Activated naive CD4-positive, alpha-beta T cell treated with anti-CD3 and anti-CD28 coated beads, Interleukin-2, amount 10 ng/mL, durations not matched to agents 7 days and 5 days (primary cell): ENCODE measurements at regions of chr5 and their contacts with region 1.

Region 1: GRCh38 chr5:96336351-96336985 is 96.6 kb downstream of the PCSK1 start:
- DNase-seq: peak; percentile 70
- H3K4me3 Mint-ChIP-seq: no peak overlapping the region
- H3K27ac Mint-ChIP-seq: no peak overlapping the region
- H3K4me1 Mint-ChIP-seq: peaks cover 4% of the 10 kb centered on the region
- H3K27me3 Mint-ChIP-seq: peaks cover 18% of the 10 kb centered on the region

Region 2: DNA sequence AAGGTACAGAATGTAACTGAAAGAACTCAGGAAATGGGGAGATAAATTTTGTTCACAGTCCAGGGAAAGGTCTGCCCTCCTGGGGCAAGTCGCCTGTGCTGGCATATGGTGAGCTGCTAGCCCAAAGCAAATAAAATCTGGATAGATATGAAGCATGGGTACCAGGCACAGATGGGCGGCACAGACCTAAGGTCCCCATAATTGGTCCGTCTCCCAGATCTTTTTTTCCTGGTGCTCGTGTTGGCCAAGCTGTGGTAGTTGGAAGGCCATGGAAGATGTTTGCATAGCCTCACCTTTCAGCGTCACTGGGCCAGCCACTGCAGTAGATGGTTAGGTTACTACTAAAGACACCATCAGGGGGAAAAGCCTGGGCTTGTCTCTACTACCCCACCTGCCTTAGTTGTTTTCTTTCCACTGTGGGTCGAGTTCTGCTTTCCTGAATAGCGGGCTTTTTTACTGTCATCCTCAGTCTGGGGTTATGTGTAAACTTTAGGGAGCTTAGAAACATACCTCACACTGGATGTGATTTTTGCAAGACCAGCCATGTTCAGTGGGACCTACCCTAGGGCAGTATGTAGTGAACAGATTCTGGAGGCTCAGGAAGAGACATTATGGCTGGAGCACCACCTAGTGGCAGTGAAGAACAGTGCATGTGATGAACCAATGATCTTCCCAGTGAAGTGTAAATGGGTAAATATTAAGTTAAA is 489.8 kb before region 1 on chr5:
- CTCF ChIA-PET with region 1: interaction called, 22 read pairs
- DNase-seq: peak; percentile 76
- H3K4me3 Mint-ChIP-seq: no peak overlapping the region
- H3K27ac Mint-ChIP-seq: no peak overlapping the region
- H3K4me1 Mint-ChIP-seq: peaks cover 21% of the 10 kb centered on the region
- H3K27me3 Mint-ChIP-seq: peaks cover 15% of the 10 kb centered on the region

Region 3: DNA sequence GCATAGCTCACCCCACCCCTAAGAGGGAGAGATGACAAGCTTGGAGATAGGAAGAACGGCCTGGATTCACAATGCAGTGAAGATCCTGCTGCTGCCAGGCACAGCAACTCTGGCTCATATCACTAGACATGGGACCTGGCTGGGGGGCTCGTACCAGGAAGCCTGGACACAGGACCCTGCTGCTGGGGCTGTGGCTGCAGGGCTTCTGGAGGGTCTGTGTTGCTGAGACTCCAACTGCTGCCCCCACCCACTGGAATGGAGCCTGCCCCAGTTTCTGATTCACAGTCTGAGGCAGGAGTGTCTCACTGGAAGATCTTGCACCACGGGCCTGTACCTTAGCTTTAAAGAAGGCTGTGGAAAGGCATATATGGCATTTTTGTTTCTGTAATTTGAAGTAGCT is 483.0 kb before region 1 on chr5:
- CTCF ChIA-PET with region 1: interaction called, 125 read pairs
- DNase-seq: no peak
- H3K4me3 Mint-ChIP-seq: no peak overlapping the region
- H3K27ac Mint-ChIP-seq: no peak overlapping the region
- H3K4me1 Mint-ChIP-seq: peaks cover 5% of the 10 kb centered on the region
- H3K27me3 Mint-ChIP-seq: no peaks in the 10 kb centered on the region

Region 4: DNA sequence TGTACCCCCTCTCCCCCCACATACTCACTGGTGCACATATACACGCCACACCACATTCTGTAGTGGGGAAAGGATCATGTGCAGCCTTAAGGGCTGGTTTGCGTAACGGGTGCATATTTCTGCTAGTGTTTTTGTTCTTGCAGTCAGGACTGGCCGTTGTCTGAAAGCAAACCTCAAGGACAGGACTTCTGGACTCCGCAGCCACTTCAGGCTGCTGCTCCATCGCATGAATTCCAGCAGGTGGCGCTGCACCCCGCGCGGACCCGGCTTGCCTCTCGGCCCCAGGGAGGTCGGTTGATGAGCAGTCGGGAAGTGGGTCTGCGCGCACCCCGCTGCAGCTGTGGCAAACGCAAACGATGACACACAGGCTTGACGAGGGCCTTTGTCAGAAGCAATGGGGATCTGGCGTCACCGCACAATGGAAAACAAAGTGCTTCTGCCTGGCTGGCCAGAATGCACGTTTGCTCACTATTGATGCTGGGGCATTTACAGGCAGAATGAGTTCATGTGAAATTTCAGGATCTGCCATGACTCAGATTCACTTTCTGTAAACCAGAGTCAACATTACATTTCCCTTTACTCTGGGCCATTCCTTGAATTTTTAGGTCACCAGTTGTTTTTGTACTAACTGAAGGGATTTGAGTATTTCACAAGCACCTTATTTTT is 477.7 kb before region 1 on chr5:
- CTCF ChIA-PET with region 1: interaction called, 125 read pairs
- DNase-seq: peak; percentile 91
- H3K4me3 Mint-ChIP-seq: peak overlapping the region; percentile 17
- H3K27ac Mint-ChIP-seq: no peak overlapping the region
- H3K4me1 Mint-ChIP-seq: peaks cover 53% of the 10 kb centered on the region
- H3K27me3 Mint-ChIP-seq: peaks cover 8% of the 10 kb centered on the region

Region 5: DNA sequence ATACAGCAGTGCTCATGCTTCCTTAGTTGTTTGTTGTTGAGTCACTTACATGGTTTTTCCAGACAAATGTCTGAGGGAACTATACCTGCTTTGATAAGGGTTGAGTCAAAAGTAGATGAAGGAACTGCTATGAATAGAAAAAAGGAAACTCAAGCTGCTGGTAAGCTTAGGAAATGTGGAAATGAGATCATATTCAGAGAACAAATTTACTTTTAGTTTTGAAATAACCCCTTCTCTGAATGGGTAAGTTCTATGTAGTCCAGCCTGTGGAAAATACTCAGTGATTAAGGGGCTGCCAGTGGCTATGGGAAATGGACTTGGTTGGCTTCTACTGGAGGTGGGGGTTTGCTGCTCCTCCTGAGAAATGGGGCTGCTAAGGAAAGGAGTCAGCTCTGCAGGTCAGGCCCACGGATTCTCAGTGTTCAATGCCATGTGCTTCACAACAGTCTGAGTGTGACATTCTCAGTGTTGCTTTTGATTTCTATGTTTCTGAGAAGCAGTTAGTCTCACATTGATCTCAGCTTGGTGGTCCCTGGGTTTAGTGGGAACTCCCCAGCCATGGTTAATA is 466.3 kb before region 1 on chr5:
- CTCF ChIA-PET with region 1: interaction called, 125 read pairs
- DNase-seq: peak; percentile 39
- H3K4me3 Mint-ChIP-seq: peak overlapping the region; percentile 56
- H3K27ac Mint-ChIP-seq: peak overlapping the region; percentile 95
- H3K4me1 Mint-ChIP-seq: peaks cover 41% of the 10 kb centered on the region
- H3K27me3 Mint-ChIP-seq: peaks cover 4% of the 10 kb centered on the region

Region 6: DNA sequence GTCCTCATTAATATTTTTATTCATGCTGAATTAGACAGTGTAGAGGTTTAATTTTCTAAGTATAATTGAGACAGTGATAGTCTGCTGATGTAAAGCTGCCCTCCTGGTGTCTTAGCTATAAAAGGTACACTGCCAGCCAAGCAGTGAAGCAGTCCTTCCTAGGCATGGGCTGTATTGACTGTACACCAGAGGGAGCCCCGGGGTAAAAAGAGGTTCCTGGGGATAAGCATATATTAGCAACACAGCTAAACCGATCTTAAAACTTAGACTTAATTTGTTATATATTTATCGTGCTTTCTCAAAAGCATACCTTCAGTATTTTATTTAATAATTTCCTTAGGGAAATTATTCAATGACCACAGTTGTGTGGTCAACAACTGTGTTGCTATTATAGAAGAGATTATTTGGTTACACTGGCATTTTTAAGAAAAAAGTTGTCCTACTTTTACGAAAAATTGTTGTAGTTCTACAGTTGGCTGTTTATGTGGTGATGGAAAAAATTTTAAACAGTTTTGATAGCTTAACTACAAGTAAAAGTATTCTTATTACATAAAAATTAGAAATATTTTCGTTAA is 443.6 kb before region 1 on chr5:
- CTCF ChIA-PET with region 1: interaction called, 11 read pairs
- DNase-seq: peak; percentile 53
- H3K4me3 Mint-ChIP-seq: no peak overlapping the region
- H3K27ac Mint-ChIP-seq: no peak overlapping the region
- H3K4me1 Mint-ChIP-seq: peaks cover 6% of the 10 kb centered on the region
- H3K27me3 Mint-ChIP-seq: no peaks in the 10 kb centered on the region

Region 7: DNA sequence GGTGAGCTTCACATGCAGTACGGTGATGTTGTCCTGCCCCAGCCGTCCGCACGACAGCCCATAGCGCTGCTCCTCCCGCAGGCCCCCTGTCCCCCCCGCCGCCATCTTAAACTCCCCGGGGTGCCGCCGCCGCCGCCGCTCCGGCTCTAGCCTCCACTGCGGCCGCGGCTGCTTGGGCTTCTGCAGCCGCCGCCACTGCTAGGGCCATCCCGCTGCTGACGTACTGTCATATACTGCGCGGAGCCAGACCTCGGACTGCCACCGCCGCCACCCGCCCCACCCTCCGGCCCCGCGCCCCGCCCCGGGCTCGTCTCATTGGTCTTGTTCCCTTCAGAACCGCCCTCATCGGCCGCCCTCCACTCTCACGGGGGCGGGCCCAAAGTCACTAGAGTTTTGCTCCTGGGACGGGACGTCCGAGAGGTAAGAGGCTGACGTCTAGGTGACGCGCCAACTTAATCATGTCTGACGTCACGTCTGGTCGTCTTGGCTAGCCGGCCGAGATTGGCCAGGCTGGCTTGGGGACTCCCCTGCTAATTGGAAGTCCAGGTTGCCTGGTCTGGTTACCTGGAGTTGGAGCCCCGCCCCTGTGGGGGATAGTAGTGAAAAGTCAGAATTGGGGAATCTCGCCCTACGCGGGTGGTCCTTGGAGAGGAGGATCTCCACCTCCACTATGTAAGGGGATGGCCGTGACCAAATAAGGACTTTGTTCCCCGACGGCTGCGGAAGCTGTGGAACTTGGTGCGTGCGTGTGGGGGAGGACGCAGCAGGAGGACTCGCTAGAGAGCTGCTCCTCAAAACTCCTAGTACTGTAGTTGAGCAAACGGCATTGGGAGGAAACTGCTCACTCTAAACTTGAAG is 374.6 kb before region 1 on chr5 and contains the start of gene ELL2:
- CTCF ChIA-PET with region 1: interaction called, 16 read pairs
- DNase-seq: peak; percentile 97
- H3K4me3 Mint-ChIP-seq: peak within 1 kb of the TSS; percentile 95
- H3K27ac Mint-ChIP-seq: peak within 1 kb of the TSS; percentile 89
- H3K4me1 Mint-ChIP-seq: peaks cover 31% of the 10 kb centered on the region
- H3K27me3 Mint-ChIP-seq: peaks cover 24% of the 10 kb centered on the region

Region 8: DNA sequence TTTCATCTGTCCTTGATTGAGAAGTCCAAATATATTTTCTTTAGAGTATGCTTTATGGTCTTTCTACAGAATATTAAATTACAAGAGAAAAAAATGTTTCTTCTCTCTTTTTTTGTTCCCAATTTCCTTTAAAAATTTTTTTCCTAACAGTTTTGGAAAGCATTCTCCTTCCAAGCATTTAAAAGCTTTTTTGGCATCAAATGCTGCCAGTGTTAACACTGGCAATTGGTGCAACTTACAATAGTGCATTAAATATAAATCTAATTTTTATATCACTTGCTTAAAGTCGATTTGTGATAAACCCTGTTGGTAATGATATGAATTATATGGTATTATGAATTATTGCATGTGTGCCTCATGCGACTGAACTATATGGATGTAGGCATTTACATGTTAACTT is 208.9 kb before region 1 on chr5:
- CTCF ChIA-PET with region 1: no interaction called
- DNase-seq: no peak
- H3K4me3 Mint-ChIP-seq: no peak overlapping the region
- H3K27ac Mint-ChIP-seq: no peak overlapping the region
- H3K4me1 Mint-ChIP-seq: no peaks in the 10 kb centered on the region
- H3K27me3 Mint-ChIP-seq: peaks cover 4% of the 10 kb centered on the region

Region 9: DNA sequence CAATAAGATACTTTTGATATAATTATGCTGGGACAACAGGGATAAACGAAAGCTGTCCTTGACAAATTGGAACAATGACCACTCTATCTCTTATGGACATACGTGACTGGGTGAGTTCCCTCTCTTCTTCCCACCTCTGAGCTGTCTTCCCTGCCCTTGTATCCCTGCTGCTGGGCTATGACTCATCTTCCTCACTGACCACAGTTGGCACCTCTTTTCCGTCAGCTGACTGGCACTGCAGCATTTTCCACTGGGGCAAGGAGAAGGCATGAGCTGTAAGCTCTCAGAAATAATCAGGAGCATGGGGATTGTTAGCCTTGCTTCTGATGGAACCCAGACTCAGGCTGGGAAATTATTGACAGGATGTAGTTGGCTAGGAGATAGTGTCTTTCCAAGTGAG is 47.9 kb after region 1 on chr5:
- CTCF ChIA-PET with region 1: no interaction called
- DNase-seq: no peak
- H3K4me3 Mint-ChIP-seq: no peak overlapping the region
- H3K27ac Mint-ChIP-seq: no peak overlapping the region
- H3K4me1 Mint-ChIP-seq: no peaks in the 10 kb centered on the region
- H3K27me3 Mint-ChIP-seq: peaks cover 15% of the 10 kb centered on the region

Region 10: GRCh38 chr5:96517295-96517694 is 180.8 kb after region 1 on chr5:
- CTCF ChIA-PET with region 1: no interaction called
- DNase-seq: no peak
- H3K4me3 Mint-ChIP-seq: no peak overlapping the region
- H3K27ac Mint-ChIP-seq: no peak overlapping the region
- H3K4me1 Mint-ChIP-seq: no peaks in the 10 kb centered on the region
- H3K27me3 Mint-ChIP-seq: peaks cover 4% of the 10 kb centered on the region